ENCODE measurements at regions of chr22 and their contacts with region 1.

Region 1: GRCh38 chr22:28882878-28883656 is at the start of gene ZNRF3:
- DNase-seq: peak; percentile 96
- ATAC-seq: peak; percentile 91
- H3K4me3 Mint-ChIP-seq: peak within 1 kb of the TSS; percentile 75
- H3K27ac Mint-ChIP-seq: peak within 1 kb of the TSS; percentile 83
- H3K4me1 Mint-ChIP-seq: peaks cover 18% of the 10 kb centered on the region
- H3K27me3 Mint-ChIP-seq: peaks cover 26% of the 10 kb centered on the region
- total RNA-seq, gene ZNRF3: 2.3 TPM

Region 2: GRCh38 chr22:28741758-28742561 is 141.1 kb before region 1 on chr22 and contains the starts of genes CHEK2 and HSCB:
- CTCF ChIA-PET with region 1: no interaction called
- POLR2A ChIA-PET with region 1: no interaction called
- intact Hi-C with region 1: loop called in 1 of 2 experiments (anchors 1 kb)
- DNase-seq: peak; percentile 99
- ATAC-seq: peak; percentile 93
- H3K4me3 Mint-ChIP-seq: peak within 1 kb of the TSS; percentile 81
- H3K27ac Mint-ChIP-seq: peak within 1 kb of the TSS; percentile 83
- H3K4me1 Mint-ChIP-seq: peaks cover 32% of the 10 kb centered on the region
- H3K27me3 Mint-ChIP-seq: no peaks in the 10 kb centered on the region
- total RNA-seq, gene CHEK2: 37.5 to 41.3 TPM
- total RNA-seq, gene HSCB: 16.5 to 18.5 TPM

Region 3: GRCh38 chr22:28772633-28773460 is 110.2 kb before region 1 on chr22 and contains the start of gene CCDC117:
- CTCF ChIA-PET with region 1: no interaction called
- POLR2A ChIA-PET with region 1: no interaction called
- intact Hi-C with region 1: loop called (anchors 1 kb)
- DNase-seq: peak; percentile 96
- ATAC-seq: peak; percentile 91
- H3K4me3 Mint-ChIP-seq: peak within 1 kb of the TSS; percentile 94
- H3K27ac Mint-ChIP-seq: peak within 1 kb of the TSS; percentile 99
- H3K4me1 Mint-ChIP-seq: peaks cover 19% of the 10 kb centered on the region
- H3K27me3 Mint-ChIP-seq: no peaks in the 10 kb centered on the region
- total RNA-seq, gene CCDC117: 36.1 to 36.8 TPM

Region 4: DNA sequence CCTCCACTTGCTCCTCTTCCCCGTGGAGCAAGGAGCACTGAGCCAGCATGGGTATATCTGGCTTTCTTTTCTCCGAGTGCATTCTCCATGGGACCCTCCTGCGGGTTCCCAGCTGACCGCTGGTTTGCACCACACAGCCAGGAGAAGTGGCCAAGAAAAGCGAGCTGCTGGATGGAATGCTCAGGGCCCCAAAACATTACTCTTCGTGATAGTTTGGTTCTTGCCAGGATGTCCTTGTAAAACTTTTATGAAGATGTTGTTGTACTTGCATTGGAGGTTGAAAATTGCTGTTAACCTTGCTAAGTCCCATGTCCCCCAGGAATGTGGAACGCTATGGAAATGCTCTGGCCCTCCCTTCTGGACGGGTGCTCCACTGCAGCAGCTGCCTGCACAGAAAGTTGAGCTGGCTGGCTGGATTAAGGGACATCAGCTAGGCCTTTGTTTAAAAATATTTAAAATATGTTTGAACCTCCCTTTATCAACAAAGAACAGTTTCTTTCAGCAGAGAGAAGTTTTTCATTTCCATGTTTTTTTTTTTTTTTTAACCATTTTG is 69.0 kb after region 1 on chr22:
- CTCF ChIA-PET with region 1: no interaction called
- POLR2A ChIA-PET with region 1: no interaction called
- intact Hi-C with region 1: loop called in 1 of 2 experiments (anchors 5 kb)
- DNase-seq: no peak
- ATAC-seq: no peak
- H3K4me3 Mint-ChIP-seq: no peak overlapping the region
- H3K27ac Mint-ChIP-seq: no peak overlapping the region
- H3K4me1 Mint-ChIP-seq: peaks cover 18% of the 10 kb centered on the region
- H3K27me3 Mint-ChIP-seq: peaks cover 71% of the 10 kb centered on the region

Region 5: GRCh38 chr22:29108109-29108508 is 225.0 kb after region 1 on chr22:
- CTCF ChIA-PET with region 1: no interaction called
- POLR2A ChIA-PET with region 1: no interaction called
- intact Hi-C with region 1: no loop called
- DNase-seq: no peak
- ATAC-seq: no peak
- H3K4me3 Mint-ChIP-seq: no peak overlapping the region
- H3K27ac Mint-ChIP-seq: no peak overlapping the region
- H3K4me1 Mint-ChIP-seq: no peaks in the 10 kb centered on the region
- H3K27me3 Mint-ChIP-seq: peaks cover 12% of the 10 kb centered on the region

Region 6: GRCh38 chr22:29387921-29388758 is 505.1 kb after region 1 on chr22 and contains the start of gene AP1B1:
- CTCF ChIA-PET with region 1: no interaction called
- POLR2A ChIA-PET with region 1: no interaction called
- intact Hi-C with region 1: loop called in 1 of 2 experiments (anchors 10 kb)
- DNase-seq: peak; percentile 97
- ATAC-seq: peak; percentile 99
- H3K4me3 Mint-ChIP-seq: peak within 1 kb of the TSS; percentile 87
- H3K27ac Mint-ChIP-seq: peak within 1 kb of the TSS; percentile 83
- H3K4me1 Mint-ChIP-seq: peaks cover 30% of the 10 kb centered on the region
- H3K27me3 Mint-ChIP-seq: no peaks in the 10 kb centered on the region
- total RNA-seq, gene AP1B1: 56.6 to 59.9 TPM